ENCODE measurements at regions of chr17 and their contacts with region 1.

Region 1: GRCh38 chr17:28644985-28645939 is at the start of gene BLTP2:
- DNase-seq: peak; percentile 95
- ATAC-seq: peak; percentile 98
- H3K4me3 Mint-ChIP-seq: peak within 1 kb of the TSS; percentile 93
- H3K27ac Mint-ChIP-seq: peak within 1 kb of the TSS; percentile 96
- H3K4me1 Mint-ChIP-seq: peaks cover 24% of the 10 kb centered on the region
- H3K27me3 Mint-ChIP-seq: no peaks in the 10 kb centered on the region
- CTCF ChIP-seq: no peak
- total RNA-seq, gene BLTP2: 111 to 139 TPM (median 116 TPM) in 3 replicates

Region 2: DNA sequence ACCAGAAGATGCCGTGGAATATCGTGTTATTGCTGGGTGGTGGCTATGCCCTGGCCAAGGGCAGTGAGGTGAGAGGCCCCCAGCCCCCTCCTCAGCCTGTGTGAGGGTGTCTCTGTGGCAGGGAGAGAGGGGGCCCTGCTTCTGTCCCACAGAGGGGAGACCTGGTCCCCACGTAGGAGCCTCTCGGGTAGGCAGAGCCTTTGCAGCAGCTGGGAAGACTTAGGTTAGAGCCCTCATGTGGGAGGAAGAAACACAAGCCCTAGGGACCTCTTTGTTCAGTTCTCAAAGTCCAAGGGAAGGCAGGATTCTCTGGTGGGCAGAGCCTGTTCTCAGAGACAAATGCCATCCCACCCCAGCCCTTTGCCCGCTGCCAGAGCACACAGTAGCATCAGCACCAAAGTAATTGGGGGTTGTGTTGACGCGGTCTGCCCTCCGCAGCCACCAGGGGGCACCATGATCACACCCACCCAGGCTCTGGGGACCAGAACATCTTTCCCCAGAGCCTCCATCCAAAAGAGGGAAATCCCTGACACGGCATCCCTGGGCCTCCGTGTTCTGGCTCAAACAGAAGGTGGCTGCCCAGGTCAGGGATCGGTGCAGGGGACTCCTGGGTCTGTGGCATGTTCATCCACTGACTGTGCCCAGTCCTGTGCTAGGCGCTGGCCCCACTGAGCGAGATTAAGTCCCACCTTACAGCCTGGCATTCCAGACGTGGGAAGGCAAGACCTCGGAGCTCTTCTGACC is 150.6 kb before region 1 on chr17:
- CTCF ChIA-PET with region 1: no interaction called
- POLR2A ChIA-PET with region 1: no interaction called
- DNase-seq: peak; percentile 89
- ATAC-seq: peak; percentile 74
- H3K4me3 Mint-ChIP-seq: no peak overlapping the region
- H3K27ac Mint-ChIP-seq: no peak overlapping the region
- H3K4me1 Mint-ChIP-seq: peaks cover 12% of the 10 kb centered on the region
- H3K27me3 Mint-ChIP-seq: peaks cover 5% of the 10 kb centered on the region
- CTCF ChIP-seq: peak; percentile 88

Region 3: DNA sequence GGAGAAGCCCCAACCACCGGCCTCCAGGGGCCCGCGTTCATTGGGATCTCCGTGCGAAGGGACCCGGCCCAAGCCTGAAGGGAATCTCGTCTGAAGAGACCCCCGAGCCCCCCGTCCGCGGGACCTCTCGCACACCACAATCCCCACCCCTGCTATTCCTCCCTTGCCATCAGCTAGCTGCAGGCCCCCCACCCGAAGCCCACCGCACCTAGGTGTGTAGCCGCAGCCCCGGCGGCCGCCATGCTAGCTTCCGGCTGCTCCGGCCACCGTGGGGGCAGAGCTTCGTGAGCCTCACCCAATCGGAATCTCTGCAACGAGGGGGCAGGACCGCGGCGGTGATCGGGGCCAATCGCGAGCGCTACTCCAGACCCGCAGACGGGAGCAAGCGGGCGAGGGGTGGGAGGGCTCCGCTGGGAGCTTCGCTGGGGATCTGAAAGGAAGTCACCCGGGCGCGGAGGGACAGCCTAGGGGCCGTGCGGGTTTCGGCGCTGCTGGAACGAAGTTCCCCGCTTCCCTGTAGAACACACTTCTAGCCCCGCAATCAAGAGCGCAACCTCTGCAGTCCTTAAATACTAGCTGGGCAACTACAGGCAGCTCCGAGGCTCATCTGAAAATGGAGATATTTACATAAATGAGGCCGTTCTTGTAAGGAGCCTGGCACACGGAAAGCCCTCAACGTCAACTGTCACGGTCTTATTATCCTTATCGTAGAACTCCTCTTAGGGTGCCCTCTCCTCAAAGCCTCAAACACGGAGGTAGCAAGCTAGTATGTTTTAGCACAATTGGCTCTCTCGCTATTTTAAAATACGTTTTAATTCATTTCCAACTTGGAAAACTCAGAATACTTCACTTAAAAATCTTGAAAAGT is 73.8 kb before region 1 on chr17 and contains the start of gene PIGS:
- CTCF ChIA-PET with region 1: interaction called, 19 read pairs
- POLR2A ChIA-PET with region 1: interaction called, 3 read pairs
- DNase-seq: peak; percentile 98
- ATAC-seq: peak; percentile 98
- H3K4me3 Mint-ChIP-seq: peak within 1 kb of the TSS; percentile 91
- H3K27ac Mint-ChIP-seq: peak within 1 kb of the TSS; percentile 87
- H3K4me1 Mint-ChIP-seq: peaks cover 20% of the 10 kb centered on the region
- H3K27me3 Mint-ChIP-seq: peaks cover 3% of the 10 kb centered on the region; the same call in 1 of the 2 replicates
- CTCF ChIP-seq: no peak
- total RNA-seq, gene PIGS: 50.6 to 55.0 TPM (median 54.6 TPM) in 3 replicates

Region 4: GRCh38 chr17:28612936-28613872 is 32.1 kb before region 1 on chr17:
- CTCF ChIA-PET with region 1: interaction called, 12 read pairs
- POLR2A ChIA-PET with region 1: no interaction called
- DNase-seq: peak; percentile 62
- ATAC-seq: peak; percentile 89
- H3K4me3 Mint-ChIP-seq: no peak overlapping the region
- H3K27ac Mint-ChIP-seq: no peak overlapping the region
- H3K4me1 Mint-ChIP-seq: no peaks in the 10 kb centered on the region
- H3K27me3 Mint-ChIP-seq: no peaks in the 10 kb centered on the region
- CTCF ChIP-seq: no peak

Region 5: GRCh38 chr17:28661635-28662537 is 16.6 kb after region 1 on chr17 and contains the starts of genes SDF2 and SUPT6H:
- CTCF ChIA-PET with region 1: interaction called, 38 read pairs
- POLR2A ChIA-PET with region 1: interaction called, 11 read pairs
- DNase-seq: peak; percentile 92
- ATAC-seq: peak; percentile 80
- H3K4me3 Mint-ChIP-seq: peak within 1 kb of the TSS; percentile 99
- H3K27ac Mint-ChIP-seq: peak within 1 kb of the TSS; percentile 100
- H3K4me1 Mint-ChIP-seq: peaks cover 20% of the 10 kb centered on the region
- H3K27me3 Mint-ChIP-seq: 0 out of 2 replicates have a peak, but pooled peaks cover 3% of the 10 kb centered on the region
- CTCF ChIP-seq: no peak
- total RNA-seq, gene SDF2: 44.4 to 49.4 TPM (median 45.9 TPM) in 3 replicates
- total RNA-seq, gene SUPT6H: 49.1 to 61.3 TPM (median 54.5 TPM) in 3 replicates

Region 6: DNA sequence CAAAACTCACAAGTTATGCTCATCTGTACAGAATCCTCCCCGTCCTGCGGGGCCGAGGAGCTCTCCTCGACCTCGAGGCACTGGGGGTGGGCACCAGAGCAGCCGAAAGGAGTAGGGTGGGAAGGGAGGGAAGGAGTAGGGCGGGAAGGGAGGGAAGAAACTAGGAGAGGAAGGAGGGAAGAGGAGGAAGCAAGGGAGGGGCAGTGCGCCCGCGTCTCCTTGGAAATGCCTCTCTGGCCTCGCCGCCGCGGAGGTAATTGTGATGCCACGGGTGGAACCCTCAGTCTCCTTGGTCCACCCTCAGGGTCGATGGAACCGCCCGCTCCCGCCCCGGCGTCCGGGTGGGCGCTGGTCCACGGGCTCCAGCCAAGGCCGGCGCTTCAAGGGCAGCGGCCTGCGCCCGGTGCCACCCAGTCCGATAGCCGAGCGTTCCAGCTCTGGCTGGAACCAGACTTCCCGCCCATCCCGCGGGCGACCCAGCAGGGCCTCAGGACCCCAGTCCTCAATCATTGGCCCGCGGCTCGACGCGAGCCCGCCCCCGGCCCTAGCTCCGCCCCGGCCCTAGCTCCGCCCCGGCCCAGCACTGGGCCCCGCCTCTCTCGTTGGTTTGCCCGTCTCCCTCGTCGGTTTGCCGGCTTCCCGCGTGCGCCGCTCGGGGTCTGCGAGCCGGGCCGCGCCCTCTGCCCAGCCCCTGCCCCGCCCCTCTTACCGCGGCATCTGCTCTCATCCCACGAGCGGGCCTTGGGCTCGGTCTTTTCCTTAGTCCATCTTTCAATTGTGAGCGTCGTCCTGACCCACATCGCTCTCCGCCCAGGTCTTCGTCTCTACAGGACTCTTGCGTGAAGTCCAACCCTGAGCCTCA is 65.8 kb after region 1 on chr17:
- CTCF ChIA-PET with region 1: interaction called, 18 read pairs
- POLR2A ChIA-PET with region 1: interaction called, 12 read pairs
- DNase-seq: peak; percentile 98
- ATAC-seq: peak; percentile 88
- H3K4me3 Mint-ChIP-seq: peak overlapping the region; percentile 98
- H3K27ac Mint-ChIP-seq: peak overlapping the region; percentile 100
- H3K4me1 Mint-ChIP-seq: peaks cover 32% of the 10 kb centered on the region
- H3K27me3 Mint-ChIP-seq: no peaks in the 10 kb centered on the region
- CTCF ChIP-seq: no peak

Region 7: DNA sequence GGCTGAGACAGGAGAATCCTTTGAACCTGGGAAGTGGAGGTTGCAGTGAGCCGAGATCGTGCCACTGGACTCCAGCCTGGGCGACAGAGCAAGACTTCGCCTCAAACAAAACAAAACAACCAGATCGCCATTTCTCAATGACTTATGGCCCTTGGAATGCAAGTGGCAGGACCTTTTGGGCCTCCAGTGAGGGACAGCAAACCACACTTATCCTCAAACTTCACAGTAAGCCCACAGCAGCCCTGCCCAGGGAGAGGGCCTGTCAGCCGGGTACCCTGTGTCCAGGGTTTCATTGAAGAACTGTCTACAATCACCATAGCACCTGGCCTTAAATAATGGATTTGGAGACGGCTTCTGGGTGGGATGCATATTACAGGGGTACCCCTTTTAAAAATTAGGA is 110.2 kb after region 1 on chr17:
- CTCF ChIA-PET with region 1: no interaction called
- POLR2A ChIA-PET with region 1: no interaction called
- DNase-seq: no peak
- ATAC-seq: no peak
- H3K4me3 Mint-ChIP-seq: no peak overlapping the region
- H3K27ac Mint-ChIP-seq: no peak overlapping the region
- H3K4me1 Mint-ChIP-seq: peaks cover 51% of the 10 kb centered on the region
- H3K27me3 Mint-ChIP-seq: no peaks in the 10 kb centered on the region
- CTCF ChIP-seq: no peak